Panc1 (cell line): ENCODE measurements at regions of chr12 and their contacts with region 1.

Region 1: DNA sequence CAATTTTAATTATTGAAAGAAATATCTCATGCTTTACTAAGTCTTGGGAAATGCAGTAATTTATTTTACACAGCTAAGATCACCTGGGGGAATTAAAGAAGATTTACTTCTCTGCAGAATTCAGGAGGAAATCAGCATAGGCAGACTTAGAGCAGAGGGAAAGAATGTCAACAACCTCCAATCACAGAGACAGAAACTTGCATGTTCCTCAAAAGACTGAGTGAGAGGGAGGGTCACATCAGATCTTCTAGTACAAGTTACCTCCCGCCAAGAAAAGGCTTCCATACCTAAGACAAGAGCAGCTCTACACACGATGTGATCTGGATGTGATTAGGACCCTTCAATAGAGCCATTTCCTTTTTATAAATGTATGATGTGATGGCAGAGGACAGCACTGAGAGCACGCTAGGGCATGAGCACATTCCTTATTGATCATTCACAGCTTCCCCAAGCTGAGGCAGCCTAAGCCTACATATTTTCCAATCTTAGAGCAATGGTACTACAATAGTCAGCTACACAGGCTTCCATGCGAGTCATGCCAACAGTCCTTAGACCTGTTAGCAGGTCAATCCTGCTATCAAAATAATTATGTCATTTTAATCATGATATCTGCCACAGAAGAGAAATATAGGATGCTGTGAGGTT is 403.3 kb downstream of the ETNK1 start:
- DNase-seq: no peak
- ATAC-seq: no peak
- H3K4me3 ChIP-seq: no peak overlapping the region
- H3K27ac ChIP-seq: no peak overlapping the region
- H3K4me1 ChIP-seq: no peaks in the 10 kb centered on the region
- H3K27me3 ChIP-seq: no peaks in the 10 kb centered on the region
- CTCF ChIP-seq: no peak

Region 2: GRCh38 chr12:23041774-23042173 is 13.5 kb after region 1 on chr12:
- CTCF ChIA-PET with region 1: no interaction called
- POLR2A ChIA-PET with region 1: interaction called, 10 read pairs
- in situ Hi-C with region 1: no loop called
- intact Hi-C with region 1: no loop called
- DNase-seq: no peak
- ATAC-seq: no peak
- H3K4me3 ChIP-seq: no peak overlapping the region
- H3K27ac ChIP-seq: no peak overlapping the region
- H3K4me1 ChIP-seq: no peaks in the 10 kb centered on the region
- H3K27me3 ChIP-seq: no peaks in the 10 kb centered on the region
- CTCF ChIP-seq: no peak